B cell (primary cell): ENCODE measurements at regions of chr15 and their contacts with region 1.

Region 1: GRCh38 chr15:58749532-58750337 is at the start of gene ADAM10:
- DNase-seq: peak; percentile 97
- ATAC-seq: peak; percentile 88
- H3K4me3 ChIP-seq: peak within 1 kb of the TSS; percentile 88 to 99 (median 99)
- H3K4me3 Mint-ChIP-seq: peak within 1 kb of the TSS; percentile 99
- H3K27ac ChIP-seq: peak within 1 kb of the TSS; percentile 86 to 92
- H3K27ac Mint-ChIP-seq: peak within 1 kb of the TSS; percentile 97
- H3K4me1 ChIP-seq: peaks cover 12 to 27% of the 10 kb centered on the region in 2 donors
- H3K4me1 Mint-ChIP-seq: peaks cover 35% of the 10 kb centered on the region
- H3K27me3 ChIP-seq: no peaks in the 10 kb centered on the region
- H3K27me3 Mint-ChIP-seq: no peaks in the 10 kb centered on the region
- CTCF ChIP-seq: no peak
- total RNA-seq, gene ADAM10: 138 and 143 TPM in 2 replicates

Region 2: GRCh38 chr15:58690703-58691102 is 59.0 kb before region 1 on chr15:
- CTCF ChIA-PET with region 1: no interaction called
- POLR2A ChIA-PET with region 1: no interaction called
- intact Hi-C with region 1: loop called (anchors 2 kb)
- DNase-seq: peak; percentile 49
- ATAC-seq: peak; percentile 87
- H3K4me3 ChIP-seq: no peak overlapping the region
- H3K4me3 Mint-ChIP-seq: peak overlapping the region; percentile 23
- H3K27ac ChIP-seq: no peak overlapping the region
- H3K27ac Mint-ChIP-seq: no peak overlapping the region
- H3K4me1 ChIP-seq: peaks cover 12 to 15% of the 10 kb centered on the region in 2 donors
- H3K4me1 Mint-ChIP-seq: peaks cover 46% of the 10 kb centered on the region
- H3K27me3 ChIP-seq: no peaks in the 10 kb centered on the region
- H3K27me3 Mint-ChIP-seq: no peaks in the 10 kb centered on the region
- CTCF ChIP-seq: no peak

Region 3: GRCh38 chr15:58715266-58715917 is 34.3 kb before region 1 on chr15:
- CTCF ChIA-PET with region 1: no interaction called
- POLR2A ChIA-PET with region 1: no interaction called
- intact Hi-C with region 1: loop called (anchors 5 kb)
- DNase-seq: peak; percentile 45
- ATAC-seq: peak; percentile 61
- H3K4me3 ChIP-seq: no peak overlapping the region
- H3K4me3 Mint-ChIP-seq: no peak overlapping the region
- H3K27ac ChIP-seq: no peak overlapping the region
- H3K27ac Mint-ChIP-seq: peak overlapping the region; percentile 8
- H3K4me1 ChIP-seq: peaks cover 13 to 15% of the 10 kb centered on the region in 2 donors
- H3K4me1 Mint-ChIP-seq: peaks cover 24% of the 10 kb centered on the region
- H3K27me3 ChIP-seq: no peaks in the 10 kb centered on the region
- H3K27me3 Mint-ChIP-seq: no peaks in the 10 kb centered on the region
- CTCF ChIP-seq: no peak

Region 4: DNA sequence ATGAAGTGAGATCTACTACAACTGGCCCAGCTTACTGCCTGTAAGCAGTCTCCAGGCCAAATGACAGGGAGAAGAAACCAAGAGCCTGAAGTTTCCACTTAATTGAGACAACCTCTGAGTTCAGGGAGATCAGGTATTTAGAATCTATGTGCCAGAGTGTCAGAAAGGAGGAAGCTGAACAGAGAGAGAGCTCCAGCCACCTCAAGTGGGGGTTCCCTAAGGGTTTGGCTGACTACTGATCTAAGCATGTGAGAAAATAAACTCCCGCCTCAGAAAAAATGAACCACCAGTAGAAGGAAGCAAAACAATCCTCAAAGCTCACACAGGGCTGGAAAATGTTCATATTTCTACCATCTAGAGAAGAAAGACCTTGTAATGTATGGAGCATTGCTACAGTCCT is 25.3 kb before region 1 on chr15:
- CTCF ChIA-PET with region 1: interaction called, 7 read pairs
- POLR2A ChIA-PET with region 1: interaction called, 5 read pairs
- intact Hi-C with region 1: loop called (anchors 1 kb)
- DNase-seq: peak; percentile 81
- ATAC-seq: peak; percentile 89
- H3K4me3 ChIP-seq: peak overlapping the region in 1 of 5 experiments; percentile 19
- H3K4me3 Mint-ChIP-seq: peak overlapping the region; percentile 13
- H3K27ac ChIP-seq: peak overlapping the region; percentile 59 to 89
- H3K27ac Mint-ChIP-seq: peak overlapping the region; percentile 57
- H3K4me1 ChIP-seq: peaks cover 38 to 48% of the 10 kb centered on the region in 2 donors
- H3K4me1 Mint-ChIP-seq: peaks cover 58% of the 10 kb centered on the region
- H3K27me3 ChIP-seq: no peaks in the 10 kb centered on the region
- H3K27me3 Mint-ChIP-seq: no peaks in the 10 kb centered on the region
- CTCF ChIP-seq: no peak

Region 5: GRCh38 chr15:59656897-59657634 is 907.3 kb after region 1 on chr15 and contains the start of gene GTF2A2:
- CTCF ChIA-PET with region 1: no interaction called
- POLR2A ChIA-PET with region 1: no interaction called
- intact Hi-C with region 1: loop called (anchors 1 kb)
- DNase-seq: peak; percentile 95
- ATAC-seq: peak; percentile 99
- H3K4me3 ChIP-seq: peak within 1 kb of the TSS; percentile 74 to 94 (median 92)
- H3K4me3 Mint-ChIP-seq: no peak within 1 kb of the TSS
- H3K27ac ChIP-seq: peak within 1 kb of the TSS; percentile 64 to 79
- H3K27ac Mint-ChIP-seq: peak within 1 kb of the TSS; percentile 86
- H3K4me1 ChIP-seq: peaks cover 19 to 27% of the 10 kb centered on the region in 2 donors
- H3K4me1 Mint-ChIP-seq: peaks cover 12% of the 10 kb centered on the region
- H3K27me3 ChIP-seq: no peaks in the 10 kb centered on the region
- H3K27me3 Mint-ChIP-seq: no peaks in the 10 kb centered on the region
- CTCF ChIP-seq: no peak
- total RNA-seq, gene GTF2A2: 39.7 and 41.5 TPM in 2 replicates